Caco-2 (cell line): ENCODE measurements at regions of chr22 and their contacts with region 1.

Region 1: DNA sequence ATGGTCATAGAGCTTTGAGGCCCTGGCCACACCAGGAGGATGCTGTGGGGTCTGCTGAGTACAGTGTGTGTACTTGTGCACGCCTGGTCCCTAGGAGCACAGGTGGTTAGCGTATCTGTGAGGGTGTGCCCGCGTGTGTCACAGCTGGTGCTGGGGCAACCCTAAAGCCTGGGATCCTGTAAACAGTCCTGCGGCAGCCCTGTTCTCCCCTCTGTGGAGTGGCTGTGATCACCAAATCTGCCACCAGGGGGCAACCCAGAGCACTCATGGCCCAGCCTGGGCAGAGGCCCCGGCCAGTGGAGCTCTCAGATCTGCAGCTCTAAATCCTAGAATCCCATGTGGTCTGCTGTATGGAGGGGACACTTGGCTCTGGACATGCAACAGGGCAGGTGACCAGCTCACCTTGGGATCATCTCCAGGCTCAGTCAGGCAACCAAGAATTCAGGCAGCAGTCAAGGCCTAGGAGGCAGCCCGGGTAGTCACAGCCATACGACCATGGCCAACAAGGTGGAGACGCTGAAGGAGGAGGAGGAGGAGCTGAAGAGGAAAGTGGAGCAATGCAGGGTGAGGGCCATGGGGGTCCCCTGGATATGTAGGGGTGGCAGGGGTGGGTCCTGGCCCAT is 3.9 kb downstream of the SH3BP1 start:
- DNase-seq: peak; percentile 69 to 90
- H3K4me3 ChIP-seq: no peak overlapping the region
- H3K4me3 Mint-ChIP-seq: no peak overlapping the region
- H3K27ac Mint-ChIP-seq: no peak overlapping the region
- H3K4me1 ChIP-seq: peaks cover 21% of the 10 kb centered on the region
- H3K4me1 Mint-ChIP-seq: peaks cover 13% of the 10 kb centered on the region
- H3K27me3 ChIP-seq: no peaks in the 10 kb centered on the region
- H3K27me3 Mint-ChIP-seq: no peaks in the 10 kb centered on the region
- CTCF ChIP-seq: peak; percentile 83 to 85

Region 2: DNA sequence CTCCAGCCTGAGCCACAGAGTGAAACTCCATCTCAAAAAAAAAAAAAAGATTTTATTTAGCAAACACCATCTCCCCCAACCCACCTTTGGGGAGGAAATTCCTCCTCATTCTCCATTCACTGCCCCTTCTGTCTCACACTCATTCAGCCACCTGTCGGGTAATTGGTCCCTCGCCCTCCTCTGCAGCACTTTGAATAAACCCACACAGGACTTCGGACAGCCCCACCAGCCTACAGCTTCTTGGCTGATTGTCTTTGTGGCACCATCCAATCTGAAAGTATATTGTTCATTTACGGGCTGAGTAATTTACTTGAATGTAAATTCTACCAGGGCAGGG is 42.2 kb before region 1 on chr22:
- CTCF ChIA-PET with region 1: no interaction called
- POLR2A ChIA-PET with region 1: no interaction called
- intact Hi-C with region 1: no loop called
- DNase-seq: no peak
- H3K4me3 ChIP-seq: peak overlapping the region; percentile 23
- H3K4me3 Mint-ChIP-seq: peak overlapping the region; percentile 72
- H3K27ac Mint-ChIP-seq: peak overlapping the region; percentile 85
- H3K4me1 ChIP-seq: peaks cover 8% of the 10 kb centered on the region
- H3K4me1 Mint-ChIP-seq: peaks cover 25% of the 10 kb centered on the region
- H3K27me3 ChIP-seq: no peaks in the 10 kb centered on the region
- H3K27me3 Mint-ChIP-seq: no peaks in the 10 kb centered on the region
- CTCF ChIP-seq: no peak

Region 3: DNA sequence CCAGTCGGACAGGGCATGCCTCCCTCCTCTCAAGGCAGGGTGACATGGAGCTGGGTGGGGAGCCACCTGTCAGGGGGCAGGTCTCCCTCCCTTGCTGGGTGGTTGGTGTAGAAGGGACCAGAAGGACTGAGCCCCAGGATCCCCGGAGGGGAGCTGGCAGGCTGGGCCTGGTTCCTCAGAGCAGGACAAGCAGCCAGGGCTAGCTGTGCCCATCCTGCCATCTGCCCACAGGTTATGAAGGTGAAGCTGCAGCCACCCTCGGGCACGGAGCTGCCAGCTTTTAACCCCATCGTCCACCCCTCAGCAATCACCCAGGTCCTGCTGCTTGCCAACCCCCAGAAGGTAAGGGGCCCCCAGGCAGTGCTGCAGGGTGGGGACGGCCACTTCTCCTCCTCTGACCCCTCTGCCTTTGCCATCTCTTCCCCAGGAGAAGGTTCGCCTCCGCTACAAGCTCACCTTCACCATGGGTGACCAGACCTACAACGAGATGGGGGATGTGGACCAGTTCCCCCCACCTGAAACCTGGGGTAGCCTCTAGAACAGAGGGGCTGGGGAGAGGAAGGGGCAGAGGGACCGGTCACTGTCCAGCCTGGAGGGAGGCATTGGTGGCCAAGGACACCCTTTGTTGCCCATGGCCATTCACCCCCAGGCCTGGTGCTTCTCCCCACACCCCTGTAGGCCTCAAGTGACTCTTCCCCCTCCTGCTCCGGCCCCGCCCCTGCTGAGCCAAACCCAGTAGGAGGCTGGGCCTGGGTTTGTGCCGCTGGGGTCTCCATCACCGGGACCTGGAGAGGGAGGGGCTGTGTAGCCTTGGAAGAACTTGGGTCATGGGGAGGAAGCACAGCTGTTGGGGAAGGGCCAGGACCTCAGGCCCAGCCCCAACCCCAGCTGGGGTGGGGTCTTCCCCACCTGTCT is 10.9 kb before region 1 on chr22:
- CTCF ChIA-PET with region 1: interaction called, 11 read pairs
- POLR2A ChIA-PET with region 1: no interaction called
- intact Hi-C with region 1: no loop called
- DNase-seq: no peak
- H3K4me3 ChIP-seq: no peak overlapping the region
- H3K4me3 Mint-ChIP-seq: no peak overlapping the region
- H3K27ac Mint-ChIP-seq: peak overlapping the region; percentile 61
- H3K4me1 ChIP-seq: peaks cover 12% of the 10 kb centered on the region; the same call in 1 of the 2 replicates
- H3K4me1 Mint-ChIP-seq: peaks cover 5% of the 10 kb centered on the region
- H3K27me3 ChIP-seq: no peaks in the 10 kb centered on the region
- H3K27me3 Mint-ChIP-seq: no peaks in the 10 kb centered on the region
- CTCF ChIP-seq: no peak

Region 4: DNA sequence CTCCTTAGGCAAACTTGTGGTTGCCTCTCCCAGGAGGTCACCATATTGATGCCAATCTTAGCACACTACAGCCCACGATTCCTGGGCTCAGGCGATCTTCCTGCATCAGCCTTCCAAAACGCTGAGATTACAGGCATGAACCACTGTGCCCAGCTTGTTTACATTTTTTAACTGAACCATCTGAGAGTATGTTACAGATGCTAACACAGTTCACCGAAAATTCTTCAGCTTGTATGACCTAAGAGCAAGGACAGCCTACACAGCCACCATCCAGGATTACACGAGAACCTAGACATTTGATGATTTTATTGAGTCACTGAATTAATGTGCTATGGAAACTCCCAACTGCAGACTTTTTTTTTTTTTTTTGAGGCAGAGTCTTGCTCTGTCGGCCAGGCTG is 26.2 kb after region 1 on chr22:
- CTCF ChIA-PET with region 1: interaction called, 10 read pairs
- POLR2A ChIA-PET with region 1: interaction called, 3 read pairs
- intact Hi-C with region 1: no loop called
- DNase-seq: no peak
- H3K4me3 ChIP-seq: no peak overlapping the region
- H3K4me3 Mint-ChIP-seq: no peak overlapping the region
- H3K27ac Mint-ChIP-seq: no peak overlapping the region
- H3K4me1 ChIP-seq: no peaks in the 10 kb centered on the region
- H3K4me1 Mint-ChIP-seq: no peaks in the 10 kb centered on the region
- H3K27me3 ChIP-seq: no peaks in the 10 kb centered on the region
- H3K27me3 Mint-ChIP-seq: no peaks in the 10 kb centered on the region
- CTCF ChIP-seq: no peak

Region 5: GRCh38 chr22:37696657-37697537 is 53.6 kb after region 1 on chr22 and contains the start of gene TRIOBP:
- CTCF ChIA-PET with region 1: interaction called, 24 read pairs
- POLR2A ChIA-PET with region 1: no interaction called
- intact Hi-C with region 1: loop called (anchors 1 kb)
- DNase-seq: peak; percentile 98
- H3K4me3 ChIP-seq: peak within 1 kb of the TSS; percentile 20
- H3K4me3 Mint-ChIP-seq: peak within 1 kb of the TSS; percentile 55
- H3K27ac Mint-ChIP-seq: peak within 1 kb of the TSS; percentile 62
- H3K4me1 ChIP-seq: peaks cover 13% of the 10 kb centered on the region; the same call in 1 of the 2 replicates
- H3K4me1 Mint-ChIP-seq: peaks cover 13% of the 10 kb centered on the region
- H3K27me3 ChIP-seq: no peaks in the 10 kb centered on the region
- H3K27me3 Mint-ChIP-seq: no peaks in the 10 kb centered on the region
- CTCF ChIP-seq: peak; percentile 51 to 80
- total RNA-seq, gene TRIOBP: 30.7 and 38.4 TPM in 2 replicates

Region 6: DNA sequence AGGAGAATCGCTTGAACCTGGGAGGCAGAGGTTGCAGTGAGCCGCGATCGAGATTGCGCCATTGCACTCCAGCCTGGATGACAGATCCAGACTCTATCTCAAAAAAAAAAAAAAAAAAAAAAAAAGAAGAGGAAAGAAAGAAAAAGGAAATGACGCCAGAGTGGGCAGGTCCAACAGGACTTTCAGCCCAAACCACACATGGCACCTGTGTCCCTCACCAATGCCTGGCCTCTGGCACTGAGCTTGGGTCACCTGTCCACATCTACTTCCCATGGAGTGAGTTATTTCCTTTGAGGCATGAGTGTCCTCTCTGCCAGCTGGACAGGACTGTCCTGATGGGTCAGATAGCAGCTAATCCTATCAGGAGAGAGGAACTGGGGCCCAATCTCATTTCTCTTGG is 149.2 kb after region 1 on chr22:
- CTCF ChIA-PET with region 1: interaction called, 13 read pairs
- POLR2A ChIA-PET with region 1: no interaction called
- intact Hi-C with region 1: loop called (anchors 1 kb)
- DNase-seq: no peak
- H3K4me3 ChIP-seq: no peak overlapping the region
- H3K4me3 Mint-ChIP-seq: no peak overlapping the region
- H3K27ac Mint-ChIP-seq: no peak overlapping the region
- H3K4me1 ChIP-seq: peaks cover 10% of the 10 kb centered on the region
- H3K4me1 Mint-ChIP-seq: no peaks in the 10 kb centered on the region
- H3K27me3 ChIP-seq: no peaks in the 10 kb centered on the region
- H3K27me3 Mint-ChIP-seq: no peaks in the 10 kb centered on the region
- CTCF ChIP-seq: no peak